Endothelial cell of umbilical vein (primary cell): ENCODE measurements at regions of chrX and their contacts with region 1.

Region 1: DNA sequence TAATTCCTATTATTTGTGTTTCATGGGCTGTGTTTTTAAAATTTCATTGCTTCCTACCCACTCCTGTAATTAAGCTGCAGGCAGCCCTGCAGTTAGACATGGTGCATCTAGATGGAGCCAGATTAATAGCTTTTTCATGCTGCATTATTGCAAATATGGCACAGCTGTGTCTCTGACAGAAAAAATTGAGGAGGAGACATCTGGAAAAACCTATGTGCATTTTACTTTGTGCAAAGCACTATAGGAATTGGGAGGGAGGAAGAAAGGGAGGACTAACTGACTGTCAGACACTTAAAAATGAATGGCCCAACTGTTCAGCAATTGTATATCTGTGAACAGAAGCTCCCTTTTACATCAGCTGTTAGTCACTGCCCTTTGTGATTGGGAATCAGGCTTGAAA is 8.1 kb upstream of the RPGR start:
- DNase-seq: no peak
- H3K4me3 ChIP-seq: no peak overlapping the region
- H3K27ac ChIP-seq: no peak overlapping the region
- H3K4me1 ChIP-seq: peaks cover 5% of the 10 kb centered on the region
- H3K27me3 ChIP-seq: no peaks in the 10 kb centered on the region
- CTCF ChIP-seq: peak in 1 of 2 donors; percentile 27
- POLR2A ChIP-seq: no peak

Region 2: GRCh38 chrX:38175140-38175539 is 160.2 kb before region 1 on chrX:
- CTCF ChIA-PET with region 1: no interaction called
- POLR2A ChIA-PET with region 1: no interaction called
- dilution Hi-C with region 1: no loop called
- intact Hi-C with region 1: no loop called
- DNase-seq: peak; percentile 7
- H3K4me3 ChIP-seq: no peak overlapping the region
- H3K27ac ChIP-seq: no peak overlapping the region
- H3K4me1 ChIP-seq: no peaks in the 10 kb centered on the region
- H3K27me3 ChIP-seq: no peaks in the 10 kb centered on the region
- CTCF ChIP-seq: peak; percentile 10 to 31
- POLR2A ChIP-seq: no peak

Region 3: DNA sequence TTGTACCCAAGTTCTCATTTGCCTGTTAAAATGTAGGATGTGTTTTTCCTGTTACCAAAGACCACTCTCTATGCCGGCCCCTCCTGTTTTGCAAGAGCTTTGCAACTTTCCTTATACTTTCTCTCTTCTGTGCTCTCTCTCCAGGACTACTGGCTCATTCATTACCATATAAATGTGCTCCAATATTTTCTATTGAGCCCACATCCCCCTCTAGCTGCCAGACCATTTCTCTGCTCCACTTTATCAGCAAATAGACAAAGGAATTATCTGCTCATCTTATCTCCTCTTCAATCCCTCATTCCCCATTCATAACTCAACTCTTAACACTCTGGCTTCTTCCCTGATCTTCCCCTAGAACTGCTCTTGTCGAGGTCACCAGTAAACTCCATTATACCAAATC is 41.6 kb before region 1 on chrX:
- CTCF ChIA-PET with region 1: no interaction called
- POLR2A ChIA-PET with region 1: no interaction called
- dilution Hi-C with region 1: no loop called
- intact Hi-C with region 1: no loop called
- DNase-seq: no peak
- H3K4me3 ChIP-seq: no peak overlapping the region
- H3K27ac ChIP-seq: no peak overlapping the region
- H3K4me1 ChIP-seq: no peaks in the 10 kb centered on the region
- H3K27me3 ChIP-seq: no peaks in the 10 kb centered on the region
- CTCF ChIP-seq: no peak
- POLR2A ChIP-seq: no peak

Region 4: DNA sequence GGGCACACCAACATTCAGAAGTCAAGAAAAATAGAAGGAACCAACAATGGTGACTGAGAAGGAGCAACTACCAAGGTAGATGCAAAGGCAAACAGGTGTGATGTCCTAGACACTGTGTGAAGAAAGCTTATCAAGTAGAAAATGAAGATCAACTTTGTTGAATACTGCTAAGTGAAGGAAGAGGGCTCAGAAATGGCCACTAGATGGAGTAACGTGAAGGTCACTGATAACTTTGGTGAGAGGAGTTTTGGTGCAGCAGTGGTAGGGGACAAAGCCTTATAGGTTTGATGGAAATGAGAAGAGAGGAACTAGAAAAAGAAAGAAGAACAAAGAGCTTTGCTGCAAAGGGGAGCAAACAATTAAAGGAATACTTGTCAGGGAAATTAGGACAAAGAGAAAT is 40.5 kb after region 1 on chrX:
- CTCF ChIA-PET with region 1: interaction called, 12 read pairs
- POLR2A ChIA-PET with region 1: no interaction called
- dilution Hi-C with region 1: no loop called
- intact Hi-C with region 1: no loop called
- DNase-seq: peak; percentile 12
- H3K4me3 ChIP-seq: no peak overlapping the region
- H3K27ac ChIP-seq: no peak overlapping the region
- H3K4me1 ChIP-seq: no peaks in the 10 kb centered on the region
- H3K27me3 ChIP-seq: no peaks in the 10 kb centered on the region
- CTCF ChIP-seq: peak; percentile 28 to 40
- POLR2A ChIP-seq: no peak

Region 5: DNA sequence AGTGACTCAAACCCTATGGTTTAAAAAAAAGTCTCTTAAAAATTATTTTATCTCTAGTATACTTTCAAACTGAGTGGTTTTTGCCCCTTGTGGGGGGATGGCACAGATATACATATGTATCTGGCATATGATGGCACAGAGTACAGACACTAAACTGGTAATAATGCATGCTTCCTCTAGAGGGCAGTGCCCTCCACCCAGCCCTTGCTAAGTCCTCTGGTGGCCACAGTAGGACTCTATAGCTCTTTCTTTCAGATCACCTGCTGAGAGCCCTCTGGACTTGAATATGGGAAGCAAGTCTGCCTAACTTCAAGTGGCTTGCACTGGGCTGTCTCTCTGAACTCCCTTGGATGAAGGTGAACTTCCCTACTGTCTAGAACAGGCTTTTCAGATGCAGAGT is 292.3 kb after region 1 on chrX:
- CTCF ChIA-PET with region 1: interaction called, 4 read pairs
- POLR2A ChIA-PET with region 1: no interaction called
- dilution Hi-C with region 1: no loop called
- intact Hi-C with region 1: loop called (anchors 10 kb)
- DNase-seq: peak; percentile 29
- H3K4me3 ChIP-seq: no peak overlapping the region
- H3K27ac ChIP-seq: no peak overlapping the region
- H3K4me1 ChIP-seq: no peaks in the 10 kb centered on the region
- H3K27me3 ChIP-seq: no peaks in the 10 kb centered on the region
- CTCF ChIP-seq: peak; percentile 56 to 70
- POLR2A ChIP-seq: no peak